Activated CD4-positive, alpha-beta memory T cell treated with anti-CD3 and anti-CD28 coated beads for 36 hours (primary cell): ENCODE measurements at regions of chrX and their contacts with region 1.

Region 1: GRCh38 chrX:75273483-75273882 is 402 bp upstream of the UPRT start:
- DNase-seq: no peak
- H3K4me3 Mint-ChIP-seq: peak overlapping the region; percentile 90
- H3K27ac Mint-ChIP-seq: peak overlapping the region; percentile 92
- H3K4me1 Mint-ChIP-seq: peaks cover 39% of the 10 kb centered on the region
- H3K27me3 Mint-ChIP-seq: no peaks in the 10 kb centered on the region

Region 2: DNA sequence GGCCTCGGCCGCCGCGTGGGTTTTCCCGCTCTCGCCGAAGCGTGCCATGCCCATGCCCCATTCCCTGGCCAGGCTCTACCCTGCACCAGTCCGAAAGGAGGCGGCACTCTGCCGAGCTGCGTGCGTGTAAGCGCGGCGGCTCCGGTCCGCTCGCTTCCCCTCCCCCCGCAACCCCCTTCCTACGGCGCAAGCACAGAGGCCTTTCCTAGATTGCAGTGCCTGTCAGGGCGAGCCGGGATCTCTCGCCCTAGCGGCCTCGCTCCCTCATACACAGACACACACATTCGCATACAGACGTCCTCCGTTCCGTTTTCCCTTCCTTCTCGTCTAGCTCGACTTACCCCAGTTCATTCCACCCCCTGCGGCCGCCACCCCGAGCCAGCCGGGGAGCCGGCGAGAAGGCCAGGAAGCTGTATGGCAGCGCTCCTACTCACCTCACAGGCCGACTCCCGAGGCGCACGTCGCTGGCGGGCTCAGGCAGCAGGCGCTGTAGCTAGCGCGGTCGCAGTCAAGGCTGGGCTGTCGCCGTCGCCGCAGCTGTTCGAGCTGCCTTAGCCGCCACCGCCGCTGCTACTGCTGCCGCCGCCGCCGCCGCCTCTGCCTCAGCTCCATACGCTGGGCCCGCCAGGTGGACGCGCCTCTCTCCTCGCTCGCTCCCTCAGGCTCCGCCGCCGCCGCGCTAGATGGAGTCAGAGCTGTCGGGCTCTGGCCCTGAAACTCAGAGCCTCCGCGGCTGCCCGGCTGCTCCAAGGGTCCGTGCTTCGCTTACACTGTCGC is 348.8 kb before region 1 on chrX:
- CTCF ChIA-PET with region 1: no interaction called
- POLR2A ChIA-PET with region 1: no interaction called
- intact Hi-C with region 1: loop called (anchors 2 kb)
- DNase-seq: peak; percentile 47
- H3K4me3 Mint-ChIP-seq: peak overlapping the region; percentile 80
- H3K27ac Mint-ChIP-seq: peak overlapping the region; percentile 64
- H3K4me1 Mint-ChIP-seq: peaks cover 8% of the 10 kb centered on the region
- H3K27me3 Mint-ChIP-seq: peaks cover 8% of the 10 kb centered on the region

Region 3: DNA sequence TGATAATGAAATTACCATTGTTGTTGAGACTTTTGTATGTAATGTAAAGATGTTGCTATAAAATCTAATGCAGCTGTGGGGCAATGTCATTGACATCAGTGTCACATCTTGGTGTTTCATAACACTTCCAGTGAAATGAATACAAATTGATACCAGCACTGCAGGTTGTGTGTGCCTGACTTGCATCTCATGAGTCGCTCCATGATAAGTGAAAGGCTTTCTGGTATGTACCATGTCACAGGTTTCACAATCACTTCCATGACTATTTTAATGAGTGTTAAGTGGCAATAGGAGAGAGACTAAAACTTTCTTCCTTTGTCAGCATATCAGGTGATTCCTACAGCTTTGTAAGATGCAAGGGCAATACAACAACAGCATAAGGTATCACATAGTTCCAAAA is 211.8 kb before region 1 on chrX:
- CTCF ChIA-PET with region 1: no interaction called
- POLR2A ChIA-PET with region 1: no interaction called
- intact Hi-C with region 1: loop called (anchors 1 kb)
- DNase-seq: peak; percentile 12
- H3K4me3 Mint-ChIP-seq: no peak overlapping the region
- H3K27ac Mint-ChIP-seq: peak overlapping the region; percentile 36
- H3K4me1 Mint-ChIP-seq: peaks cover 6% of the 10 kb centered on the region
- H3K27me3 Mint-ChIP-seq: no peaks in the 10 kb centered on the region

Region 4: GRCh38 chrX:75522565-75523431 is 249.3 kb after region 1 on chrX and contains the start of gene ZDHHC15:
- CTCF ChIA-PET with region 1: no interaction called
- POLR2A ChIA-PET with region 1: no interaction called
- intact Hi-C with region 1: loop called (anchors 2 kb)
- DNase-seq: peak; percentile 70
- H3K4me3 Mint-ChIP-seq: peak within 1 kb of the TSS; percentile 80
- H3K27ac Mint-ChIP-seq: peak within 1 kb of the TSS; percentile 42
- H3K4me1 Mint-ChIP-seq: peaks cover 20% of the 10 kb centered on the region
- H3K27me3 Mint-ChIP-seq: no peaks in the 10 kb centered on the region
- total RNA-seq, gene ZDHHC15: 0.14 to 0.22 TPM